ENCODE measurements at regions of chr12 and their contacts with region 1.

Region 1: DNA sequence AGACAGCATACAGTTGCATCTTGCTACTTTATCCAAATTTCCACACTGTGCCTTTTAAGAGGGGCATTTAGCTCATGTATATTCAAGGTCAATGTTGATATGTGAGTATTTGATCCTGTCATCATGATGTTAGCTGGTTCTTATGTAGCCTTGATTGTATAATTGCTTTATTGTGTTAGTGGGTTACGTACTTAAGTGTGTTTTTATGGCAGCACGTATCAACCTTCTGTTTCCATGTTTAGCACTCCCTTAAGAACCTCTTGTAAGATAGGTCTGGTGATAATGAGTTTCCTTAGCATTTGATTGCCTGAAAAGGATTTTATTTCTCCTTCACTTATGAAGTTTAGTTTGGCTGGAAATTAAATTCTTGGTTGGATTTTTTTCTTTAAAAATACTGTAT is 445.2 kb downstream of the NAV3 start:
- DNase-seq: no peak
- ATAC-seq: no peak
- H3K4me3 ChIP-seq: no peak overlapping the region
- H3K27ac ChIP-seq: no peak overlapping the region
- H3K4me1 ChIP-seq: no peaks in the 10 kb centered on the region
- H3K27me3 ChIP-seq: no peaks in the 10 kb centered on the region
- CTCF ChIP-seq: no peak
- POLR2A ChIP-seq: no peak

Region 2: DNA sequence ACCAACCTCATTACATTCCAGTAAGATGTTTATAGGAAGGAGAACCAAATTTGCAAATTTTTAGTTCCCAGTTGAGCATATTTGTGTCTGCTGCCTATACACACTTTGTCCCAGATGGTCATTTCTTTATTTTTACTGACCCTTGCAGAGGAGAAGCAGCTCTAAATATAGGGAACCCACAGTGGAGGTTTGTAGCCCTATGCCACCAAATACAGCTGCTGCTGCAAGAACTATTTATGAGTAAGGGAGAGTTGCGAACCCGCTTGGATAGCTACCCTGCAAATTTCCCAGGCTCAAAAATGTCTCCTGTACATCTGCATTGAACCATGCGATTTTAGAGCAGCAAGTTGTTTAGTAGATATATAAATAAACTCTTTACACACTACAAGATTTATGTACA is 397.0 kb before region 1 on chr12:
- intact Hi-C with region 1: no loop called
- DNase-seq: no peak
- ATAC-seq: no peak
- H3K4me3 ChIP-seq: no peak overlapping the region
- H3K27ac ChIP-seq: no peak overlapping the region
- H3K4me1 ChIP-seq: no peaks in the 10 kb centered on the region
- H3K27me3 ChIP-seq: no peaks in the 10 kb centered on the region
- CTCF ChIP-seq: no peak
- POLR2A ChIP-seq: no peak

Region 3: GRCh38 chr12:78128211-78128610 is 147.7 kb before region 1 on chr12:
- intact Hi-C with region 1: no loop called
- DNase-seq: no peak
- ATAC-seq: no peak
- H3K4me3 ChIP-seq: no peak overlapping the region
- H3K27ac ChIP-seq: no peak overlapping the region
- H3K4me1 ChIP-seq: no peaks in the 10 kb centered on the region
- H3K27me3 ChIP-seq: no peaks in the 10 kb centered on the region
- CTCF ChIP-seq: no peak
- POLR2A ChIP-seq: no peak

Region 4: GRCh38 chr12:79098530-79098929 is 822.6 kb after region 1 on chr12:
- intact Hi-C with region 1: loop called in 1 of 10 experiments (anchors 5 kb)
- DNase-seq: no peak
- ATAC-seq: no peak
- H3K4me3 ChIP-seq: no peak overlapping the region
- H3K27ac ChIP-seq: no peak overlapping the region
- H3K4me1 ChIP-seq: no peaks in the 10 kb centered on the region
- H3K27me3 ChIP-seq: no peaks in the 10 kb centered on the region
- CTCF ChIP-seq: no peak
- POLR2A ChIP-seq: no peak